Left ventricle myocardium inferior (tissue), 1 donor: ENCODE measurements at regions of chr6 and their contacts with region 1.

Region 1: GRCh38 chr6:28136585-28137504 is 4.8 kb upstream of the ZKSCAN8 start:
- DNase-seq: peak; percentile 90
- H3K4me3 ChIP-seq: peak overlapping the region; percentile 81
- H3K27ac ChIP-seq: peak overlapping the region; percentile 95
- H3K4me1 ChIP-seq: peaks cover 71% of the 10 kb centered on the region
- H3K27me3 ChIP-seq: no peaks in the 10 kb centered on the region
- CTCF ChIP-seq: no peak

Region 2: DNA sequence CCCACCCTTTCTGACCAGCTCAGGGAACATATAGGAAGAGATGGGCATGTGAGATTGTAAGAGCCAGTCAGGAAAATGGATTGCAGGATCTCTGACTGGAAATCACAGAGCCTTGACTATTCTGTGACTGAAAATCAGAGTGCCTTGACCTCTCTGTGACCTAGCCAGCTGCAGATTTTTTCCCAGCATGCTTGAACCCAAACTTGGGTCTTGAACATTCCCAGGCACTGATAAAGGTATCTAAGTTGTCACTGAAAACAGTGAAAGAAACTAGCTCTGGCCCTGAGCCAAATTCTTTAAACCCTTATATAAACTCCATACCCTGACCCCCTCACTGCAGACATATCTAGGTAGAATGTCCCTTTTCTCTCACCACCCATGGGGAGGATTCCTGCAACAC is 58.8 kb before region 1 on chr6:
- intact Hi-C with region 1: no loop called
- DNase-seq: no peak
- H3K4me3 ChIP-seq: no peak overlapping the region
- H3K27ac ChIP-seq: no peak overlapping the region
- H3K4me1 ChIP-seq: peaks cover 20% of the 10 kb centered on the region
- H3K27me3 ChIP-seq: no peaks in the 10 kb centered on the region
- CTCF ChIP-seq: no peak

Region 3: GRCh38 chr6:28225056-28225834 is 88.4 kb after region 1 on chr6 and contains the start of gene ZSCAN9:
- intact Hi-C with region 1: loop called (anchors 10 kb)
- DNase-seq: peak; percentile 83
- H3K4me3 ChIP-seq: peak within 1 kb of the TSS; percentile 91
- H3K27ac ChIP-seq: peak within 1 kb of the TSS; percentile 90
- H3K4me1 ChIP-seq: peaks cover 27% of the 10 kb centered on the region
- H3K27me3 ChIP-seq: peaks cover 16% of the 10 kb centered on the region
- CTCF ChIP-seq: no peak
- total RNA-seq, gene ZSCAN9: 9.7 TPM

Region 4: GRCh38 chr6:28252009-28252975 is 115.4 kb after region 1 on chr6 and contains the start of gene ZKSCAN4:
- intact Hi-C with region 1: loop called (anchors 10 kb)
- DNase-seq: peak; percentile 74
- H3K4me3 ChIP-seq: peak within 1 kb of the TSS; percentile 89
- H3K27ac ChIP-seq: peak within 1 kb of the TSS; percentile 62
- H3K4me1 ChIP-seq: peaks cover 34% of the 10 kb centered on the region
- H3K27me3 ChIP-seq: no peaks in the 10 kb centered on the region
- CTCF ChIP-seq: no peak
- total RNA-seq, gene ZKSCAN4: 3.1 TPM

Region 5: GRCh38 chr6:28355743-28356665 is 219.2 kb after region 1 on chr6:
- intact Hi-C with region 1: loop called (anchors 10 kb)
- DNase-seq: peak; percentile 63
- H3K4me3 ChIP-seq: peak overlapping the region; percentile 76
- H3K27ac ChIP-seq: peak overlapping the region; percentile 92
- H3K4me1 ChIP-seq: peaks cover 46% of the 10 kb centered on the region
- H3K27me3 ChIP-seq: no peaks in the 10 kb centered on the region
- CTCF ChIP-seq: peak; percentile 88

Region 6: DNA sequence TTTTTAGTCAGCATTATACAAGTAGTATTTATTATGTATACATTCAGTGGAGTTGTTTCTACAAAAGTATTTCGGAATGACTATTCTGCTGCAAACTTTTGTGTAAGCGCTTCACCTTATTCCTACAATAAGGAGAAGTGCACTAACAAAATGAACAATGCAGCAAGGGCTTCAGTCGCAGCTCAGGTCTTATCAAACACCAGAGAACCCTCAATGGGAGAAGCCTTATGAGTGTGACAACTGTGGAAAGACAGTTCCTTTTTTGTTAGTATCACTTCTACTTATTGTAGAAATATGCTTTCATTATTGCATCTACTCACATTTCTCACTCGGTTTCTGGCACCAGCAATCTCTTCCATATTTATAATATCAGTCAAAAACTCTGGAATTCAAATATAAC is 231.7 kb after region 1 on chr6:
- intact Hi-C with region 1: no loop called
- DNase-seq: no peak
- H3K4me3 ChIP-seq: no peak overlapping the region
- H3K27ac ChIP-seq: no peak overlapping the region
- H3K4me1 ChIP-seq: no peaks in the 10 kb centered on the region
- H3K27me3 ChIP-seq: no peaks in the 10 kb centered on the region
- CTCF ChIP-seq: no peak